ENCODE measurements at regions of chr2 and their contacts with region 1.

Region 1: DNA sequence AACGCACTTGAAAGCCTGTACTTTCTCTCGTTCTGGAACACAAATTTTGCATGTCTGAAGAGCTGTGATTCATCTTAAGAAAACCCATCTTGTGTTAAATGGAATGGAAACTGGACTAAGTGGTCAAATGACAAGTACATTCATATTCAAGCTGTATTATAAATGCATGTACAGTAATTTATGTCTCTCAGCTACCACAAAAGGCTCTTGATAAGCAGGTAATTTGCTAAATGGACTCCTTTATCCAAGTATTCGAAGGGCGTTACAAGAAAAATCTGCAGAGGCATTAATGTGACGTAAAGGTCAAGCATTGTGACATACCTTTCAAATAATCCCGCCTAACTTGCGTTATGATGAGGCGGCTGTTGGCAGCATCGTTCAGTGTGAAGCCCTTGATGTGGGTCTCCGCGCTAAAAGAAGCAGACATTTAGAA is 66.6 kb downstream of the ABCG8 start:
- DNase-seq: no peak
- ATAC-seq: no peak
- H3K4me3 Mint-ChIP-seq: no peak overlapping the region
- H3K27ac Mint-ChIP-seq: no peak overlapping the region
- H3K4me1 Mint-ChIP-seq: no peaks in the 10 kb centered on the region
- H3K27me3 Mint-ChIP-seq: no peaks in the 10 kb centered on the region
- CTCF ChIP-seq: no peak

Region 2: DNA sequence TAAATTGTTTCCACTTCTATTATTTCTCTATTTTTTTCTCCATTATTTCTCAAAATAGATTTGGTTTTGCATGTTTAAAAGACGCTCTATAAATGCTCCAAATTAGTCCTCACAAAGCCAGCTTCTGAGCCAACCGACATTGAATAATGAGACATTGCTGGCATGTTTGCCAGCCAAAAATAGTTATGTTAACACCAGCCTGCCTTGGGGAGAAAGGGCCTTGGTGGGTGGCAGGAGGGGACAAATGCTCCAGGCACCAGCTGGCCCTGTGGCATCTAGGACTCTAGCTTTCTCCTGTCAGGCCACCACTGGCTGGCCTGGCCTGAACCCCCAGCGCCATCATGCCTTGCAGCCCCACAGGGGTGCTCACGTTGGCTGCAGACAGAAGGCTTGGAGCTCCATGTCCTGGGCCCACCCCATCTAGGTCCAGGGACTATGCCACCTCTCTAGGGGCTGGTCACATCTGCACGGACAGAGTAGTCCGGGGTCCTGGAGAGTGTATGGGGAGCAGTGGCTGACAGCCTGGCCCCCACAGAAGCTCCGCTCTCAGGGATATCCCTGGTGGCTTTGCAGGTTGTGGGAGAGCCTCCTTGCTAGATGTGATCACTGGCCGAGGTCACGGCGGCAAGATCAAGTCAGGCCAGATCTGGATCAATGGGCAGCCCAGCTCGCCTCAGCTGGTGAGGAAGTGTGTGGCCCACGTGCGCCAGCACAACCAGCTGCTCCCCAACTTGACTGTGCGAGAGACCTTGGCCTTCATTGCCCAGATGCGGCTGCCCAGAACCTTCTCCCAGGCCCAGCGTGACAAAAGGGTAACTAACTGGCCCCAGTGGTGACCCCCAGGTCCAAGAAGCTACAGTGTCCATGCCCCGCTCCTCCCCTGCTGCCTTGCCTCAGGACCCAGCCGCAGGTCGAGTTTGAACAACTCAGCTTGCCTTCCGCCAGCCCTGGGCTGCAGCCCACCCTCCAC is 54.1 kb before region 1 on chr2:
- CTCF ChIA-PET with region 1: no interaction called
- POLR2A ChIA-PET with region 1: no interaction called
- intact Hi-C with region 1: no loop called
- DNase-seq: no peak
- ATAC-seq: no peak
- H3K4me3 Mint-ChIP-seq: no peak overlapping the region
- H3K27ac Mint-ChIP-seq: no peak overlapping the region
- H3K4me1 Mint-ChIP-seq: peaks cover 4% of the 10 kb centered on the region
- H3K27me3 Mint-ChIP-seq: peaks cover 12% of the 10 kb centered on the region
- CTCF ChIP-seq: no peak

Region 3: DNA sequence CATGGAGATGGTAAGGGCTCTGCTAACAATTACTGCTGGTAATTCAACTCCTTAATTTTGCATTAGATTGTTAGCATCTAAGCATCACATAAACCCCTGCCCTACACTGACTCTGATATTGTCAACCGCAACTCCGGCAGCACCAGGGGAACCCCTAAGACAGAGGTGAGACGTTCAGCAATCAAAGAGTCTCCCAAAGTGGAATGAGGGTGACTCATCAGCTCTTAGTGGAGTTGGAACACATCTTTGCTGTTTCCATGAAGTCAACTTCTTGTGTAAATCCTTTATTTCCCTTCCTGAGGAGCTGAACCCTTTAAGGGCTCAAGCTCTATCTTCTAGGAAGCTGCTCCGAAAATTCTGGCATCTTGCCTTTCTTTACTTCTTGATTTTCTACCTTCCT is 14.5 kb before region 1 on chr2:
- CTCF ChIA-PET with region 1: no interaction called
- POLR2A ChIA-PET with region 1: no interaction called
- intact Hi-C with region 1: no loop called
- DNase-seq: no peak
- ATAC-seq: no peak
- H3K4me3 Mint-ChIP-seq: no peak overlapping the region
- H3K27ac Mint-ChIP-seq: no peak overlapping the region
- H3K4me1 Mint-ChIP-seq: no peaks in the 10 kb centered on the region
- H3K27me3 Mint-ChIP-seq: no peaks in the 10 kb centered on the region
- CTCF ChIP-seq: no peak

Region 4: GRCh38 chr2:43950383-43951008 is 45.1 kb after region 1 on chr2:
- CTCF ChIA-PET with region 1: no interaction called
- POLR2A ChIA-PET with region 1: no interaction called
- intact Hi-C with region 1: loop called (anchors 10 kb)
- DNase-seq: no peak
- ATAC-seq: no peak
- H3K4me3 Mint-ChIP-seq: no peak overlapping the region
- H3K27ac Mint-ChIP-seq: no peak overlapping the region
- H3K4me1 Mint-ChIP-seq: no peaks in the 10 kb centered on the region
- H3K27me3 Mint-ChIP-seq: no peaks in the 10 kb centered on the region
- CTCF ChIP-seq: no peak